HepG2 (cell line): ENCODE measurements at regions of chr9 and their contacts with region 1.

Region 1: DNA sequence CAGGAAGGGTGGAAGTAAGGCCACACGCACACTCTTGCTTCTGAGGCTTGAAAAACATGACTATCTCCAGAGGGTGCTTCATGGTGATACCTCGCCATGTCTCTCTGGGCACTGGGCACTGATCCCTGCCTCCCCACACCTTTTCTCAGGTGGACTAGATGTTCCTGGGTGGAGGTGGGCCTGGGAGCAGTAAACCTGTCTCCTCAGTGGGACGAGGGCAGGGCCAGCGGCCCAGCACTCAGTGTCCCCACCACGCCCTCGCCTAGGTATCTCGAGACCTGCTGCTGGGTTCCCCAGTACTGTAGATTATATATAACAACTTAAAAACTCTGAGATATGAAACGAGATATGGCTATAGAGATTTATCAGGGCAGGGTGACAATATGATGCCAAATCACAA is 5.6 kb downstream of the IFNA13 start:
- DNase-seq: no peak
- ATAC-seq: no peak
- H3K4me3 ChIP-seq: no peak overlapping the region
- H3K27ac ChIP-seq: no peak overlapping the region
- H3K4me1 ChIP-seq: no peaks in the 10 kb centered on the region
- H3K27me3 ChIP-seq: no peaks in the 10 kb centered on the region
- CTCF ChIP-seq: no peak
- EP300 ChIP-seq: no peak
- POLR2A ChIP-seq: no peak
- RAD21 ChIP-seq: no peak

Region 2: DNA sequence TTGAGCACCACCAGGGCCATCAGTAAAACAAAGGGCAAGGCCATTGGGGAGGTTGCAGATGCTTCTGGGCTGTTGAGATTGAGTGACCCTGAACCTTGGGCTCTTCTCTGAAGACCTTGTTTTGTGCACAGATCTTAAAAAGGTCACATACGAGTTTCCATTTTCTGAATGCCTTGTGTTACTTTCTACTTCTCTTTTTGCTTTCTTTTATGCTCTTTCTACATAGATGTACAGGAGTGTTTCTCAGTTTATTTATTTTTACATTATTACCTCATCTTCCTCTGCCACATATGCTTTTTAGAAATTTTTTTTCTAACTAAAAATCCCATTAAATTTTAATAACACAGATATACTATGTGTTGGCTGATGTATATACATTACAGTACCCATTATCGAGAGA is 57.1 kb before region 1 on chr9 and contains the start of gene IFNA5:
- CTCF ChIA-PET with region 1: no interaction called
- POLR2A ChIA-PET with region 1: no interaction called
- in situ Hi-C with region 1: no loop called
- intact Hi-C with region 1: loop called (anchors 2 kb)
- DNase-seq: no peak
- ATAC-seq: no peak
- H3K4me3 ChIP-seq: no peak within 1 kb of the TSS
- H3K27ac ChIP-seq: no peak within 1 kb of the TSS
- H3K4me1 ChIP-seq: no peaks in the 10 kb centered on the region
- H3K27me3 ChIP-seq: no peaks in the 10 kb centered on the region
- CTCF ChIP-seq: no peak
- EP300 ChIP-seq: no peak
- POLR2A ChIP-seq: no peak
- RAD21 ChIP-seq: no peak
- total RNA-seq, gene IFNA5: not detected in 2 replicates